ENCODE measurements at regions of chr12 and their contacts with region 1.

Region 1: DNA sequence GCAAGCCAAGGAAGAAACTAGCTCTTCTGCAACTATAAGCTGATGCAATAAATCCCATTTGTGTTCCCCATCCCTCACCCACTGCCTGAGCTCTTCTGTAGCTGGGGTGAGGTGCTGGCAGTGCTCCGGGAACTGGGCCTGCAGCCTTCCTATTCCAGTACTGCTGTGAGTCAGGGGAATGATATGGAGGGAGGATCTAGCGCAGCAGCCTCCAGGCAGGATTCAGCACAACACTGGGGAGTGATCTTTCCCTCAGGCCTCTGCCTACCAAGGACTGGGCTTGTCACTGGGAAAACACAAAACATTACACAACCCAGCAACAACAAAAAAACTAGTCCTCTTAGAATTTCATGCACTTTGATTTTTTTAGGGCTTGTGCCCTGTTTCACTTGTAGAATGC is 58.7 kb downstream of the ST8SIA1 start:
- DNase-seq: peak; percentile 97
- H3K4me3 ChIP-seq: no peak overlapping the region
- H3K27ac ChIP-seq: peak overlapping the region; percentile 95
- H3K4me1 ChIP-seq: peaks cover 27% of the 10 kb centered on the region
- H3K27me3 ChIP-seq: no peaks in the 10 kb centered on the region
- CTCF ChIP-seq: no peak

Region 2: GRCh38 chr12:22206116-22206728 is 69.6 kb before region 1 on chr12:
- CTCF ChIA-PET with region 1: no interaction called
- dilution Hi-C with region 1: no loop called
- in situ Hi-C with region 1: no loop called
- intact Hi-C with region 1: loop called (anchors 5 kb)
- DNase-seq: peak; percentile 42
- H3K4me3 ChIP-seq: no peak overlapping the region
- H3K27ac ChIP-seq: peak overlapping the region; percentile 27
- H3K4me1 ChIP-seq: peaks cover 9% of the 10 kb centered on the region
- H3K27me3 ChIP-seq: no peaks in the 10 kb centered on the region
- CTCF ChIP-seq: no peak

Region 3: GRCh38 chr12:22491034-22491433 is 215.2 kb after region 1 on chr12:
- CTCF ChIA-PET with region 1: no interaction called
- dilution Hi-C with region 1: no loop called
- in situ Hi-C with region 1: no loop called
- intact Hi-C with region 1: no loop called
- DNase-seq: no peak
- H3K4me3 ChIP-seq: no peak overlapping the region
- H3K27ac ChIP-seq: no peak overlapping the region
- H3K4me1 ChIP-seq: no peaks in the 10 kb centered on the region
- H3K27me3 ChIP-seq: no peaks in the 10 kb centered on the region
- CTCF ChIP-seq: no peak

Measured in mammary epithelial cell (primary cell).